ENCODE measurements at regions of chr2 and their contacts with region 1.

Region 1: GRCh38 chr2:197813093-197813787 is 8.8 kb downstream of the PLCL1 start:
- DNase-seq: no peak
- ATAC-seq: peak in 1 of 2 donors; percentile 59

Region 2: GRCh38 chr2:198053776-198054698 is 240.8 kb after region 1 on chr2:
- intact Hi-C with region 1: loop called in 1 of 2 experiments (anchors 5 kb)
- DNase-seq: peak; percentile 27
- ATAC-seq: peak; percentile 63 to 72